ENCODE measurements at regions of chr19 and their contacts with region 1.

Region 1: DNA sequence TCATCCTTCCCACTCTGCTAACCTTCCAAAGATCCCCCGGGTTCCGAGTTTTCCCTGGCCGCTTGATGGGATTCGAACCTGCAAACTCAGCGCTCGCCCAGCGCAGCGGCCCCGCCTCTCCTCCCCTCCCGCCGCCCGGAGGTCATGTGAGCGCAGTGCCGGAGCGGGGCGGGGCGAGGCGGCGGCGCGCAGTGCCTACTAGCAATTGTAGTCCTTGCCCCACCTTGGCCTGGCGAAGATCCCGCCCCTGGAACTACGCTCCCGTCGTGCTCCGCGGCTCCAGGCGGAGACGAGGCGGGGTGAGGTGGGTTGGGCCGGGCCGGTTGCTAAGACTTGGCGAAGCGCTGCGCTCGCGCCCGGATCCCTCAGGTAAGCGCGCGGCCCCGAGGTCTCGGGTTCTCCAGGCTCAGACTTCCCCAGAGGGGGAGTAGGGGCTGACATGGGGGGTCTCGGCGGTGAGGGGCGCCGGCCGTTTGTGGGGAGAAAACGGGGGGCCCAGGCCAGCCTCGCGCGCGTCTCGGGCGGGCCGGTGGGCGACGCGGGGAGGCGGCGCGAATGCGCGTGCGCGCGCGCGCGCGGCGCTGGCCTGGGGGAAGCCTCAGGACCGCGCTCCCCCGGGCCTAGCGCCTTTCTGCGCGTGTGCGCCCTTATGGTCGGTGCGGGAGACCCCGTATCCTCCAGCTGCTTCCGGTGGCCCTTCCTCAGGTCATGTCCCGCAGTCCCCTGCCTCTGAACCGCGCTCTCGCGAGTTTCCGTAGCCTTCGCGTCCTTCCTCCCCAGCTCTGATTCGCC is at the starts of genes ADAT3 and SCAMP4:
- DNase-seq: peak; percentile 99 to 100 (median 100)
- H3K4me3 ChIP-seq: peak within 1 kb of the TSS; percentile 70
- H3K27ac ChIP-seq: peak within 1 kb of the TSS; percentile 87 to 95
- H3K4me1 ChIP-seq: peaks cover 19% of the 10 kb centered on the region
- H3K27me3 ChIP-seq: no peaks in the 10 kb centered on the region
- CTCF ChIP-seq: no peak
- EP300 ChIP-seq: no peak
- POLR2A ChIP-seq: peak; percentile 82
- total RNA-seq, gene ADAT3: 2.6 to 13.7 (median 4.6) TPM
- total RNA-seq, gene SCAMP4: 32.0 to 87.0 (median 62.6) TPM

Region 2: GRCh38 chr19:1864481-1865175 is 40.6 kb before region 1 on chr19:
- intact Hi-C with region 1: loop called in 1 of 4 experiments (anchors 5 kb)
- DNase-seq: peak; percentile 70 to 85 (median 81)
- H3K4me3 ChIP-seq: peak overlapping the region; percentile 79
- H3K27ac ChIP-seq: peak overlapping the region; percentile 18 to 87
- H3K4me1 ChIP-seq: peaks cover 14% of the 10 kb centered on the region
- H3K27me3 ChIP-seq: no peaks in the 10 kb centered on the region
- CTCF ChIP-seq: peak; percentile 49 to 79 (median 77)
- EP300 ChIP-seq: no peak
- POLR2A ChIP-seq: peak; percentile 17

Region 3: GRCh38 chr19:3526507-3527244 is 1621.4 kb after region 1 on chr19:
- intact Hi-C with region 1: no loop called
- DNase-seq: peak in 1 of 5 donors; percentile 19
- H3K4me3 ChIP-seq: no peak overlapping the region
- H3K27ac ChIP-seq: no peak overlapping the region
- H3K4me1 ChIP-seq: no peaks in the 10 kb centered on the region
- H3K27me3 ChIP-seq: no peaks in the 10 kb centered on the region
- CTCF ChIP-seq: no peak
- EP300 ChIP-seq: no peak
- POLR2A ChIP-seq: no peak

Measured in ovary (tissue), 10 donors.